GM13976 (cell line): ENCODE measurements at regions of chr3 and their contacts with region 1.

Region 1: DNA sequence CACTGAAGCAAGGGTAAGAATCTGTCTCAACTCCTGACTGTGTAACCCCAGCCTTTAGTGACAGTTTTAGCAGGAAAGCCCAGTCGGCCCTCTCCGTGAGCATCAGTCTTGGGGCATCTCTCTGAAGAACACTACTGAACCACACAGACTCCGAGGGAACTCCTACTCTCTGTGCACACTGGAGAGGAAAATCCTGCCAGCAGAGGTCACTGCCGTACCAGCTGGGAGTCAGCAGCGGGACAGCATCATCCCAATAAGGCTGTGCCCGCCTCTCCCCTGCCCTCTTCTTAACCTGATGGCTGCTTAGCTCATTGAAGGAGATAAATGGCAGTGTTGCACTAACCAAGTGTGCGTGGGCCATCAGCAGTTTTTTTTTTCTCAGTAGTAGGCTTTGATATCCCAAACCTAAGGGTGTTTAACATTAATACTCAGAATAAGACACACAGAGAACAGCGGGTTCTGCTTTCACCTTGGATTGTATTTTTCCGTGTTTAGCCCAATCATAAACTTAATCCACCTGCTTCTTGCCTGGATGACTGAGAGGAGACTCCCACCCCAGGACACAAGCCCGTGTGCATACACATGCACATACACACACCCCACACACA is 26.6 kb upstream of the RASA2 start:
- DNase-seq: peak; percentile 80
- CTCF ChIP-seq: peak; percentile 71

Region 2: GRCh38 chr3:141151439-141151838 is 308.8 kb before region 1 on chr3:
- in situ Hi-C with region 1: no loop called
- DNase-seq: no peak
- CTCF ChIP-seq: no peak

Region 3: DNA sequence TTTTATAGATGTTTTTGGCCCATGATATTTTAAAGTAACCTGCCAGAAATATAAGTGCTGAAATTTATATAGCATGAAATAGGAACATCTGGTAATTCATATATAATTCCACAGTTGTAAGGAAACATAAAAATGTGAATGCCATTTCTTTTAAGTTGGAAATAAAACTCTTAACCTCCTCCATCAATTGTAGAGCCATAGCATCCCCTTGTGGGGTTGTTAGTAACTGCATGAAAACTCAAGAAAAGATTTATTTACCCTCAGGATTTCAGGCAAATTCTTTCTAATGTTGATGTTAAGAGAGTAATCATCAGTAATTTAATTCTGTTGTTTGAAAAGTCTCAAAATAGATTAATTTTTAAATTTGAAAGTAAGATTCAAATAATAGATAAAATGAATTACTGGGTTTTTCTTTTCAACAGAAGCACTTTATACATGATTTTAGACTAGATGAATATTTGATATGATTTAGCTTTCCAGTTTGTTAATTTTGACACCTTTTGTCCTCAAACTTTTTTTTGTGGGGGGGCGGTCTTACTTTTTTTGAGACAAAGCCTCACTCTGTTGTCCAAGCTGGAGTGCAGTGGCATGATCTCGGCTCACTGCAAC is 101.3 kb after region 1 on chr3:
- in situ Hi-C with region 1: loop called (anchors 5 kb)
- DNase-seq: peak; percentile 33
- CTCF ChIP-seq: peak; percentile 80

Region 4: DNA sequence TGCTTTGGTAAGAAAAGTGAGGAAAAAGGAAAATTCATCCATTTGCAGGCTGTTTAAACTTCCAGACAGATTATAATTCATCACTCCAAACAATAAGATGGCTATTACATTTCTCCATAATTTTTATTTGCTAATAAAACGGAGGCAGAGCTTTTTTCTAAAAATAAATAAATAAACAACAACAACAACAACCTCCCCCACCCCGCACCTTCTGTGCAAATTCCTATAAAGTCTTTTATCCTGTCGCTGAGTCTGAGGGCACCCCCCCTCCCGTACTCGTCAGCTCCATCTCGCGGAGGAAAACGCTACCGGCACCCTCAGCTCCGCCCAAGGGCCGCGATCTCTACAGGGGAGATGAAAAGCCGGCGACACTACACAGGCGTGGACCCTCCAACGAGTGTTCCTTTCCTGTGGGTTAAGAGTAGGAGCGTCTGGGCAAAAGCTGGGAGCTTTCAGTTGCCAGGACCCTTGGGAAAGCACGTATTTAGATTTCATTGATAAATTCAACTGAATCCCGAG is 415.2 kb after region 1 on chr3:
- in situ Hi-C with region 1: loop called (anchors 25 kb)
- DNase-seq: peak; percentile 86
- CTCF ChIP-seq: peak; percentile 83